ENCODE measurements at regions of chr22 and their contacts with region 1.

Region 1: DNA sequence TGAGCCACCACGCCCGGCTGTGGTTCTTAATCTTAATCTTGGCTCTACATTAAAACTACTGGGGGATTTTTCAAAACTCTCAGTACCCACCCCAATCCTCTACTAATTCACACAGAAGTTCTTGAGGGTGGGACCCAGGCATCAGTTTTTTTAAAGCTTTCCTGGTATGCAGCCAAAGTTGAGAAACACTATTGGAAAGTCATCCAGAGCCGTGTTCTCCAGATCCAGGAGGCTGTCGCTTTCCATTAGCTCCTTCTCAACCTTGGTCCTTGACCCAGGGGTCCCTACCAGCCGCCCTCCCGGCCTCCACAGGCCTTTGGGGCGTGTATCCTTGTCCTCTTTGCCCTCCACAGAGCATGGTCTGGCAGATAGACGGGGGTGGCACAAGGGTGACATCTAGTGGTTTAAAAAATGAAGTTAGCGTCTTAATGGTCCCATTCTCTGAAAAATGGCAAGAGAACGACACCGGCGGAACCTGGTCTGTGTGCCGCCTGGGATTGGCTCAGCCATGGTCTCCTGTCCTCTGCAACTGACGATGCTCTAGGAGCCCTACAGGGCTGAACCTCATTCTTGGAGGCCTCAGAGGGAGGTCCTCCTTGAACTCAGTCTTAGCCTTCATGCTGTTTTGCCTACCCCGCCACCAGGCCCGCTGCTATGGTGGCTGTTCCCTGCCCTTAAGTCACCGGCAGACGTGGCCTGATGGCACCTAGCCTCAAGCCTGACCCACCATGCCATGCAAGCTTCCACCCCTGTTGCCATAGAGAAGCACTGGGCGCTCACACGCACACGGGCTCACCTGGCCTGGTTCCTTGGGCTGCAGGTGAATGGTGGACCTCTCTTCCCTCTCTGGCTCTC is 152.0 kb upstream of the SYN3 start:
- DNase-seq: peak; percentile 83
- H3K4me3 ChIP-seq: no peak overlapping the region
- H3K27ac ChIP-seq: no peak overlapping the region
- H3K4me1 ChIP-seq: peaks cover 25% of the 10 kb centered on the region
- CTCF ChIP-seq: peak; percentile 88

Region 2: DNA sequence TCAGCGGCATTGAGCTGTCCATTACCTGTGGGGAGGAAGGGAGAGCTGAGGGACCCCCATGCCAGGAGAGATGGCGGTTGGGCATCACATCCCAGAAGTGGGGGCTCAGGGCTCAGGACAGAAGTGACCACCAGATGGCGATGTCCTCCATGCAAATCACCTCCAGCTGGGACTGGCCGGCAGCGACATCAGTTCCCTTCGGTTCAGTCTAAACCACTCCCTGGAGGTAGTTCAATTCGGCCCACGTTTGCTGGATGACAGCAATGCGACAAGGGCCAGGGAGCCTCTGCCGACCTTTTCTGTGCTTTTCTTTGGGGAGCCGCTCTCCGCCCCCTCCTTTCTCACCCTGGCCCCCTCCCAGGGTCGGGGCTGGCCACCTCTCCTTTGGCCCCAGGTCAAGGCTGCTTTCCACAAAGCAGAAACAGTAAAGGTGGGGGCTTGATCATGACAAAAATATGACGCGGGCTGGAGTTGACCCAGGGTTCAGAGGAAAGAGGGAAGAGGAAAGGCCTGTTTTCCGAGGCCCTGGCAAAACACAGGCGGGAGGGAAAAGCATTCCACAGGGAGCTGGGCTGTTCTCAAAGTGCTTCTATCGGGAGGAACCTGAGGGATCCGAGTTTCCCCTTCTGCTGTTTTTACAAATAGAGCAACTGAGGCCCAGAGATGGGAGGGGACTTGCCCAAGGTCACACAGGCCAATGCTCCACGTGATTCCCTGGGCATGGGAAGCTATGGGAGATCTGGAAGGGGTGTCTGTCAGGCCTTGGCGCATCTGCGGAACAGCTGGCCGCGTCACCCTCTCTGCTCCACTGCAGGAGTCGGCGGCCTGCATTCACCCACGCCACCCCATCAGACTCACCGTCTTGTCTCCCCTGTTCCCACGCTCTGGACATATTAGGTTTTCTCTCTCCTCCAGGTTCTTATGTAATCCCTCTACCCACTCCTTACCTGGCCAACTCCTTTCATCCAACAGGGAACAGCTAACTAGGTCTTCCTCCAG is 680.9 kb before region 1 on chr22:
- CTCF ChIA-PET with region 1: no interaction called
- POLR2A ChIA-PET with region 1: no interaction called
- intact Hi-C with region 1: loop called (anchors 10 kb)
- DNase-seq: peak; percentile 56
- H3K4me3 ChIP-seq: no peak overlapping the region
- H3K27ac ChIP-seq: no peak overlapping the region
- H3K4me1 ChIP-seq: no peaks in the 10 kb centered on the region
- CTCF ChIP-seq: peak; percentile 76

Region 3: GRCh38 chr22:32800994-32801942 is 408.9 kb before region 1 on chr22 and contains the start of gene TIMP3:
- CTCF ChIA-PET with region 1: no interaction called
- POLR2A ChIA-PET with region 1: no interaction called
- intact Hi-C with region 1: no loop called
- DNase-seq: no peak
- H3K4me3 ChIP-seq: no peak within 1 kb of the TSS
- H3K27ac ChIP-seq: no peak within 1 kb of the TSS
- H3K4me1 ChIP-seq: no peaks in the 10 kb centered on the region
- CTCF ChIP-seq: no peak
- total RNA-seq, gene TIMP3: not detected in 2 replicates

Region 4: GRCh38 chr22:33018232-33018864 is 191.8 kb before region 1 on chr22:
- CTCF ChIA-PET with region 1: interaction called, 39 read pairs
- POLR2A ChIA-PET with region 1: interaction called, 4 read pairs
- intact Hi-C with region 1: loop called (anchors 1 kb)
- DNase-seq: peak; percentile 71
- H3K4me3 ChIP-seq: no peak overlapping the region
- H3K27ac ChIP-seq: no peak overlapping the region
- H3K4me1 ChIP-seq: peaks cover 18% of the 10 kb centered on the region
- CTCF ChIP-seq: peak; percentile 98

Region 5: DNA sequence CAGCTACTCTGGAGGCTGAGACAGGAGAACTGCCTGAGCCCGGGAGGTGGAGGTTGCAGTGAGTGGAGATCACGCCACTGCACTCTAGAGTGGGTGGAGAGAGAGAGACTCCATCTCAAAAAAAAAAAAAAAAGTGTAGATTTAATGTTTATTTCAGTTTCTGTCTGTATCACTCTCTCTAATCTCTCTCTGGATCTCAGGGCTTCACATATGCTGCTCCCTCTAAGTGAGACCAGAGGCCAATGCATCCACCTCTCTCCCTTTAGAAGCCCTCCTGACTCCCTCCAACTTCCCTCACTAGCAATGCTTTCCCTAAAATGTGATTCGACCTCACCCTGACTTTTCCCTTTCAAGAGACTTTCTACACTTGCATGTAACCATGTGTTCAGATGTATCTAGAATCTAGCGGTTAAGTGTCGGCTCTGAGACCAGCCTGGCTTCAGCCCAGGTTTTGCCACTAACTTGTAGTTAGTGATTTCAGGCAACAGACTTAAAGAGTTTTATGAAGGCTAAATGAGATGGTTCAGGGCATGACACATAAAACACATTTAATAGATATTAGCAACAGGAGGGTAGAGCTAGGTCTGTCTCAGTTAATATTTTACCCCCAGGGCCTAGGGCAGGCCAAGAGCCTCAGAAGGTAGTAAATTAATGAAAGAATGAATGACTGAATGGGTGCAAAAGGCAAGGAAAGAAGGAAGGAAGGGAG is 345.8 kb after region 1 on chr22:
- CTCF ChIA-PET with region 1: no interaction called
- POLR2A ChIA-PET with region 1: interaction called, 15 read pairs
- intact Hi-C with region 1: no loop called
- DNase-seq: no peak
- H3K4me3 ChIP-seq: no peak overlapping the region
- H3K27ac ChIP-seq: no peak overlapping the region
- H3K4me1 ChIP-seq: no peaks in the 10 kb centered on the region
- CTCF ChIP-seq: no peak

Region 6: DNA sequence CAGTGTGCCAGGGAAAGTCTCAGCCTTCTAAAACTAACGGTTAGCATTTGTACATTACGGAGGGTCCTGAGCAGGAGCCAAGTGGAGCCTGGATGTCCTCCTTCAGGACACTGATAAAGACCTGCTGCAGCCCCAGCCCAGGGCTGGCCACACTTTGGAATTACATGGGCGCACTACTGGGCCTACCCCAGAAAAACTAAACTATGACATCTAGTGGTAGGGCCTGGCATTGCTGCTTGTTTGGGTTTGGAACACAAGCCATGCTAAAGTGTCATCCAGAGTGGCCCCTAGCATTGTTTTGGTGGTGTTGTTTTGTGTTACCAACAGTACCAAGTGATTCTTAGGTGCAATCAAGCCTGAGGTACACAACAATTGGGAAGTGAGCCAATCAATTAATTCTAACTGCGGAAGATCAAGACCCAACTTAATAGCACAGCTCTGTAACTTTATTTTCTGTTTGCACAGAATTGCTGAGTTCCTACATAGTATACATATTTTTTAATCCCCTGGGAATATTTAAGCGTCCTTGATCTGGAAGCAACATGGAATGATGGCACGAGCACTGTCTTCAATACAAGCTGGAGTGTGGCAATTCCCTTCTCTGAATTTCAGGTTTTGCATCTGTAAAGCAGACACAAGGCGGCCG is 369.4 kb after region 1 on chr22:
- CTCF ChIA-PET with region 1: no interaction called
- POLR2A ChIA-PET with region 1: no interaction called
- intact Hi-C with region 1: loop called (anchors 10 kb)
- DNase-seq: peak; percentile 80
- H3K4me3 ChIP-seq: no peak overlapping the region
- H3K27ac ChIP-seq: no peak overlapping the region
- H3K4me1 ChIP-seq: peaks cover 52% of the 10 kb centered on the region
- CTCF ChIP-seq: peak; percentile 98